Activated T-helper 1 cell treated with anti-CD3 and anti-CD28 coated beads, Interleukin-12 subunit alpha, Interleukin-12 subunit beta, Interleukin-2, Interleukin-4 antibody, amounts not matched to agents 30 ng/mL and 10 ng/mL and 1 ng/mL, durations not matched to agents 14 hours and 24 hours and 36 hours (primary cell): ENCODE measurements at regions of chr1 and their contacts with region 1.

Region 1: DNA sequence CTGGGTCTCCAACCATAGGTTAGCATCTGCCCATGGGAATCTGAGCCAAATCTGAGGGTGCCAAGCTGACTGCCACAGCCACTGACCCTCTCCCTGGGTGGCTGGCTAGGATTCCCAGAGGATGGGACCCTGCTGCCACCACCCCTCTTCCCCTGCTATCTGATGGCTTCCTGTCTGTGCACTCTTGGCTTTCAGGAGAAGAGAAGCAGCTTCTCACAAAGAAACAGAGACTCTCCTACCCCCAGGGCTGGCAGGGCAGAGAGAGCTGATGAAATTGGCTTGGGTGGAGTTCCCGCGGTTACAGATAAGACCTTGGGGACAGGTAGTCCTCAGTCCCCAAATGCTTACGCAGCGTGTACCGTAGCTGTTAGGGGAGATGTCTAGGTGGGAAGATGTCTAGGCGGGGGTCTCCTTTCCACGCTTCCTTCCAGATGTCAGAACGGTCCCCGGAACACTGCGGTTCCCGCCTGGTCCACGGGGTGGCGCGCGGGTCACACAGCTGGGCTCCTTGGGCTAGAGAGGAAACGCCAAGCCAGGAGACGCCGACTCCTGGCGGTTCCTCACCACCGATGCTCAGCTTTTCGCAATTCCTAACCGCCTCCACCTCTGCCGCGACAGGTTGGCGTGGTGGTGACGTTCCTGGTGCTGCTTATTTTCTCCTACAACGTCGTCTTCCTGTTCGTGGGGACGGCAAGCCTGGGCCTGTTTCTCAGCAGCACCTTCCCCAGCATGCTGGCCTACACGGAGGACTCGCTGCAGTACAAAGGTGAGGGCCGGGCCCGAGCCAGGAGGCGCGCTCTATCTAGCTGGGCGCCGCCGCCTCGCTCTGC is 40.1 kb downstream of the ELK4 start:
- DNase-seq: peak; percentile 82
- H3K4me3 Mint-ChIP-seq: peak overlapping the region; percentile 78
- H3K27ac Mint-ChIP-seq: peak overlapping the region; percentile 77
- H3K4me1 Mint-ChIP-seq: peaks cover 22% of the 10 kb centered on the region
- H3K27me3 Mint-ChIP-seq: peaks cover 3% of the 10 kb centered on the region

Region 2: GRCh38 chr1:205528887-205529825 is 62.6 kb before region 1 on chr1:
- intact Hi-C with region 1: loop called (anchors 1 kb)
- DNase-seq: peak; percentile 68
- H3K4me3 Mint-ChIP-seq: no peak overlapping the region
- H3K27ac Mint-ChIP-seq: no peak overlapping the region
- H3K4me1 Mint-ChIP-seq: no peaks in the 10 kb centered on the region
- H3K27me3 Mint-ChIP-seq: no peaks in the 10 kb centered on the region

Region 3: DNA sequence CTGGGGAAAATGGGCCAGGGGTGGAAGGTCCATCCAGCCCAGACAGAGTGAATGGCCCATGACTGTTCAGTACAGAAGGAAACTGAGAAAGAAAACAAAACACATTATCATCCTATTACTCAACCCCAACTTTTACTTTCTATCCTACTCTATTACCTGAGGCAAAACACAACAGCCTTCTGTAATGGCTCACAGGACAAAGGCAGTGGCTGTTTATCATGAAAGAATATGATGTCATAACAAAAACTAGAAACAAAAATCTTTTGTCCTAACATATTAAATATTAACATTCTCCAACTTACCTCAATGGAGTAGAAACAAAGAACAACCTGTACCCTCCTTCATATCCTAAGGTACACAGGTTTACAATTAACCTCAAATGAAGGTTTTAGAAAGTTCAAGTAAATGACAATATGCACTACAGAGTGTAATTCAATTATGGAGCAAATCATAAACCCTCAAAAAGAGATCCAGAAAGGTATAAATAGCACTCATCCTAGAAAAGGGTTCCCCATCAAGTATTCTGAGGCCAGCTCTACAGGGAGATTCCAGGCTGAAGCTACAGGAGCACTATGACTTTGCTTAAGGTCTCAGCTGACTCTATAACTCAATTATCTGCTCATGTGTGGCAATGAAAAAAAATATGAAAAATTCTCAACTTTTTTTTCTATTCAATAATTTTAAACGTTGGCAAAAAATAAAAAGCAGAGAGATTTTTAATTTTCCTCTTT is 25.0 kb after region 1 on chr1:
- intact Hi-C with region 1: loop called (anchors 2 kb)
- DNase-seq: no peak
- H3K4me3 Mint-ChIP-seq: no peak overlapping the region
- H3K27ac Mint-ChIP-seq: no peak overlapping the region
- H3K4me1 Mint-ChIP-seq: peaks cover 32% of the 10 kb centered on the region
- H3K27me3 Mint-ChIP-seq: no peaks in the 10 kb centered on the region

Region 4: DNA sequence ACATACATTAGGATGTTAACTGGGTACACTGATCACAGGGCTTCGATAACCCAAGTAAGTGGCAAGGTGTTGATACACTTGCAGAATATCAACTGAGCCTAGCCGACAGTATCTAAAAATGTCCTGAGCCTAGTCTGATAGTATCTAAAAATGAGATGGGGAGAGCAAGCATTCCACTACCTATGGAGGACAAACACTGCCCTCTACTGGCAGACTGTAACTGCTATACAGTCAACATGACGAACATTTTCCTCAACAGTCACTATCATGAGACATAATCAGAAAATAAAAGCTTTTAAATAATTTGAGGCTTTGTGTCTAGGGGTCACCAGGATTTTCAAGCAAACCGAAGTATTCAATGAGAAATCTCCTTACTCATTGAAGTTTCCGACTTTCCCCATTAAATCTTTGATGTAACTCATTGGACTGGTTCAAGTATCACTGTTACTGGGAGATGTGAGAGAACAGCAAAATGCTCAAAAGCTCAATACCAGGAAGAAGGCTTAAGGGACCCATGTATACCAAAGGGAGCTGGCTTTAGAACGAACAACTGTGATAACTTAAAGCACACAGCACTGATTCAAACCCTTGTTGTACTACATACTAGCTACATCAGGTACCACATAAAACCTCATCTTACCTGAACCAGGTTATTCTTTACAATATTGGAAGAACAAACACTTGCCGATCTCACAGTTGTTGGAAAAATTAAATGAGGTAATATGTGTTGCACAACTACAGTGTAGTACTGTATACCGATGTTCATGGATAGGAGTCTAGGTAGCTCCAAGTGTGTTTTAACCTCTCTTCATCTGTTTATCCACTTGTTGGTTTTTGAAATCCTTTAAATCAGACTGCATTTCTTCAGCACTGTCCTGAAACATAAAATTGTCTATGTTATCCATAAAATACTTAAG is 119.6 kb after region 1 on chr1:
- intact Hi-C with region 1: loop called (anchors 1 kb)
- DNase-seq: peak; percentile 42
- H3K4me3 Mint-ChIP-seq: no peak overlapping the region
- H3K27ac Mint-ChIP-seq: peak overlapping the region; percentile 56
- H3K4me1 Mint-ChIP-seq: peaks cover 16% of the 10 kb centered on the region
- H3K27me3 Mint-ChIP-seq: no peaks in the 10 kb centered on the region

Region 5: DNA sequence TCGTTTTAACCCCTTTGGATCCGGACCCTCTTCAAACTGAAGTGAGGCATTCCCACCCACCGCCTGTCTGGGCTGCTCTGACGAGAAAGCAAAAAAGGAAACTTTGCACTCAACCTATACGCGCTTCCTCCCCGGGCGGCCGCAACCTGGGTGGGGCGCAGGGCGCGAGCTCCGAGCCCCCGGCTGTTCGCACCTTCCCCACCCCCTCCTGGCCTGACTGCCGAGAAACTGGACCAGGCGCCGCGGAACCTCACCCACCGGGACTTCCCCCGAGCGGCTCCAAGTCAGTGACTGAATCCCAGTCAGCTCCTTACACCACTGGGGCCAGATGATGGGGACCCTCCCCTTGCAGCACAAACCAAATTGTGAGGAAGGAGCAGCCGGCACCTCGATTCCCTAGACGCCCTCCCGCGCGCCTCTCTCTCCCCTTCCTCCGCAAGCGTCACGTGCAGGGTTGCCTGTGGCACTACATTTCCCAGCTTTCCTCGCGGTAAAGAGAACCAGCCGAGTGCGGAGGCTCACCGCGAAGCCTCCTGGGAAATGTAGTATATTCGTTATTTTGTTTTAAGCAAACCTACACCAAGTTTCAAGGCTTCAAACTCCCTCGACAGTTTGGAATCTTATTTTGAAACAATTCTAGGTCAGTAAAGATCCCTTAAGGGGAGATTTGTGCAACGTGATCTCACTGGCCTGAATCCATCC is 183.4 kb after region 1 on chr1 and contains the start of gene RAB29:
- intact Hi-C with region 1: loop called (anchors 5 kb)
- DNase-seq: peak; percentile 82
- H3K4me3 Mint-ChIP-seq: peak within 1 kb of the TSS; percentile 88
- H3K27ac Mint-ChIP-seq: peak within 1 kb of the TSS; percentile 93
- H3K4me1 Mint-ChIP-seq: peaks cover 59% of the 10 kb centered on the region
- H3K27me3 Mint-ChIP-seq: no peaks in the 10 kb centered on the region
- total RNA-seq, gene RAB29: 37.2 and 38.1 TPM in 2 replicates

Region 6: GRCh38 chr1:205963352-205964155 is 371.8 kb after region 1 on chr1:
- intact Hi-C with region 1: no loop called
- DNase-seq: no peak
- H3K4me3 Mint-ChIP-seq: no peak overlapping the region
- H3K27ac Mint-ChIP-seq: no peak overlapping the region
- H3K4me1 Mint-ChIP-seq: peaks cover 17% of the 10 kb centered on the region
- H3K27me3 Mint-ChIP-seq: peaks cover 5% of the 10 kb centered on the region